ENCODE measurements at regions of chr6 and their contacts with region 1.

Region 1: DNA sequence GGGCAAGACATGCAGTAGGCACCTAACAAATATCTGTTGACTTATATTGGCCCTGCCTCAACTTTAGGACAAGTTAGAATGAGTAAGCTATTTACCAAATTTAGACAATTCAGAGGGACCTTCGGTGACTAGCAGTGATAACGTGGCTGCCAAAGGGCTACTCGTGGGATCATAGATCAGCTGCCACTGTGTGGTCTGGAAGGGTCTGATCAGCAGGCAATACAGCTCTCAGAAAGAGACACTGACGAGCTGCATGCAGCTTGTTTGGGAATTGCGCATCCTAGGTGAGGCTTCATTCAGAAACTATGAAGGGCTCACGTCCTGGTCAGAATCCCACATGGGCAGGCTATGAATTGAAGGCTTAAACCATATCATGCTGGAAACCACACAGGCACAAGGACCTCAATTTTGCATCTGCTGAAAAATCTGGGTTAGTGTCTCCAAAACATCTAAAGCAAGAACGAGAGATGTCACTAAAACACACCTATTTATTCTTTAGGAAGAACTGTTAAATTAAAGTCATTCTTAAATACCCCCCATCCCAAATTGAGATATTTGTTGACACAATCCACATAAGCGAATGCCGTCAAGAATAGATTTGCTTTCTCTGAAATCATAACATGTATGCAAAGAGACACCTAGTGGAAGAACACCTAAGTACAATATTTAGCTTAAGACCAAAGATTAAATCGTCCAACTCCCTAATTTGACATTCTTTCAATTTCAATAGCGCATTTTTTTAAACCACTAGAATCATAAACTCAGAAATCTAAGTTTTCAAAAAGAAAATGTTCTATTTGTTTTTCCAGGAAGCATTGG is 79.6 kb downstream of the IPCEF1 start:
- DNase-seq: peak in 4 of 5 donors; percentile 61 to 65 (median 63)
- H3K4me3 ChIP-seq: peak overlapping the region in 1 of 2 donors; percentile 26
- H3K4me3 Mint-ChIP-seq: peak overlapping the region; percentile 54 to 91 (median 79)
- H3K27ac ChIP-seq: no peak overlapping the region
- H3K27ac Mint-ChIP-seq: peak overlapping the region; percentile 2 to 85 (median 57)
- H3K4me1 ChIP-seq: peaks cover 16% of the 10 kb centered on the region
- H3K4me1 Mint-ChIP-seq: peaks cover 17 to 27% (median 22%) of the 10 kb centered on the region in 4 donors
- H3K27me3 ChIP-seq: no peaks in the 10 kb centered on the region
- H3K27me3 Mint-ChIP-seq: no peaks in the 10 kb centered on the region

Region 2: GRCh38 chr6:153677522-153677921 is 599.5 kb before region 1 on chr6:
- CTCF ChIA-PET with region 1: no interaction called
- POLR2A ChIA-PET with region 1: no interaction called
- intact Hi-C with region 1: no loop called
- DNase-seq: no peak
- H3K4me3 ChIP-seq: no peak overlapping the region
- H3K4me3 Mint-ChIP-seq: no peak overlapping the region
- H3K27ac ChIP-seq: no peak overlapping the region
- H3K27ac Mint-ChIP-seq: no peak overlapping the region
- H3K4me1 ChIP-seq: no peaks in the 10 kb centered on the region
- H3K4me1 Mint-ChIP-seq: no peaks in the 10 kb centered on the region
- H3K27me3 ChIP-seq: no peaks in the 10 kb centered on the region
- H3K27me3 Mint-ChIP-seq: no peaks in the 10 kb centered on the region

Region 3: GRCh38 chr6:154164397-154165165 is 112.4 kb before region 1 on chr6:
- CTCF ChIA-PET with region 1: interaction called, 323 read pairs
- POLR2A ChIA-PET with region 1: interaction called, 4 read pairs
- intact Hi-C with region 1: no loop called
- DNase-seq: no peak
- H3K4me3 ChIP-seq: no peak overlapping the region
- H3K4me3 Mint-ChIP-seq: peak overlapping the region in 2 of 8 donors; percentile 29 to 45
- H3K27ac ChIP-seq: no peak overlapping the region
- H3K27ac Mint-ChIP-seq: peak overlapping the region in 6 of 7 donors; percentile 37 to 90 (median 70)
- H3K4me1 ChIP-seq: peaks cover 24% of the 10 kb centered on the region
- H3K4me1 Mint-ChIP-seq: peaks cover 25 to 50% (median 34%) of the 10 kb centered on the region in 4 donors
- H3K27me3 ChIP-seq: no peaks in the 10 kb centered on the region
- H3K27me3 Mint-ChIP-seq: no peaks in the 10 kb centered on the region

Region 4: GRCh38 chr6:154229786-154230185 is 47.2 kb before region 1 on chr6:
- CTCF ChIA-PET with region 1: interaction called, 40 read pairs
- POLR2A ChIA-PET with region 1: interaction called, 3 read pairs
- intact Hi-C with region 1: no loop called
- DNase-seq: peak in 4 of 5 donors; percentile 39 to 70 (median 52)
- H3K4me3 ChIP-seq: peak overlapping the region; percentile 52 to 59
- H3K4me3 Mint-ChIP-seq: peak overlapping the region; percentile 86 to 95 (median 90)
- H3K27ac ChIP-seq: peak overlapping the region; percentile 42
- H3K27ac Mint-ChIP-seq: peak overlapping the region; percentile 89 to 96 (median 95)
- H3K4me1 ChIP-seq: peaks cover 75% of the 10 kb centered on the region
- H3K4me1 Mint-ChIP-seq: peaks cover 56 to 85% (median 74%) of the 10 kb centered on the region in 4 donors
- H3K27me3 ChIP-seq: no peaks in the 10 kb centered on the region
- H3K27me3 Mint-ChIP-seq: no peaks in the 10 kb centered on the region

Region 5: DNA sequence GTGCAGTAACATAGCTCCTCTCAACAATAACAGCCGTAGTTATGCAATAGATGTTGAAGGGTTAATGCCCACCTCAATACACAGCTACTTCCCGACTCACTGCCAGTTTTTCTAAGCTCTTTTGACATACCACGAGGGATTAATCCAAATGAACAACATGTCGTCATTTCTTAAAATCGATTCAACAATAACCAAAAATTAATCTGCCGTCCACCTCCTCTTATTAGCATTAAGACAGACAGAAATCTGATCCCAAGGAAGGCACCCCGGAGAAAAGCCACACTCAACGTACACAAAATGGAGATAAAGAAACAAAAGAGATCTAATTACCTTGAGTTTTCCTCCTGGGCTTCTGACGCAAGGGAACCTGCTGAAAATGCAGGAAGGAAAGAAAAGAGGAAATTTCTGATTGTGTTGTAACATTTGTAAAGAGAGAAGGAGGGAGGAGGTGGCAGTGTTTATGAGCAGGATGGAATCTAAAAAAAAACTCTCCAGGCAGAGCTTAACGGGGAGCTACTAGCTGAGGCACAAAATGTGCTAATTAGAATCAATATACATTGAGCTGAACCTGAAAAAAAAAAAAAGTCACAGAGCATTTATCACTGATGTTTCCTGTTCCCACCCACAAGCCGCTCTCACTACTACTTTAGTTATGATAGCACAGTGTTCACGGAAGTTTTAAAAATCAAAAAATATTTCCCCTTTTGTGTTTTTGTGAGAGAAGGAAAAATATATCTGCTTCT is 29.7 kb before region 1 on chr6:
- CTCF ChIA-PET with region 1: interaction called, 113 read pairs
- POLR2A ChIA-PET with region 1: interaction called, 18 read pairs
- intact Hi-C with region 1: loop called (anchors 1 kb)
- DNase-seq: peak; percentile 50 to 64 (median 58)
- H3K4me3 ChIP-seq: peak overlapping the region; percentile 69 to 75
- H3K4me3 Mint-ChIP-seq: peak overlapping the region; percentile 89 to 99 (median 96)
- H3K27ac ChIP-seq: peak overlapping the region; percentile 87
- H3K27ac Mint-ChIP-seq: peak overlapping the region; percentile 89 to 97 (median 94)
- H3K4me1 ChIP-seq: peaks cover 75% of the 10 kb centered on the region
- H3K4me1 Mint-ChIP-seq: peaks cover 55 to 95% (median 74%) of the 10 kb centered on the region in 4 donors
- H3K27me3 ChIP-seq: no peaks in the 10 kb centered on the region
- H3K27me3 Mint-ChIP-seq: no peaks in the 10 kb centered on the region